Dendritic cell treated with granulocyte-macrophage colony-stimulating factor and Interleukin-4, amounts not matched to agents 40 ng/mL and 50 ng/mL, for 4 days (primary cell): ENCODE measurements at regions of chr18 and their contacts with region 1.

Region 1: GRCh38 chr18:331221-331821 is 63.5 kb upstream of the THOC1 start:
- H3K4me3 Mint-ChIP-seq: no peak overlapping the region
- H3K27ac Mint-ChIP-seq: peak overlapping the region; percentile 78
- H3K4me1 Mint-ChIP-seq: peaks cover 49% of the 10 kb centered on the region
- H3K27me3 Mint-ChIP-seq: peaks cover 6% of the 10 kb centered on the region

Region 2: GRCh38 chr18:394997-395383 is 63.7 kb after region 1 on chr18:
- intact Hi-C with region 1: loop called (anchors 10 kb)
- H3K4me3 Mint-ChIP-seq: no peak overlapping the region
- H3K27ac Mint-ChIP-seq: peak overlapping the region; percentile 48
- H3K4me1 Mint-ChIP-seq: peaks cover 35% of the 10 kb centered on the region
- H3K27me3 Mint-ChIP-seq: no peaks in the 10 kb centered on the region